A673 (cell line): ENCODE measurements at regions of chr1 and their contacts with region 1.

Region 1: DNA sequence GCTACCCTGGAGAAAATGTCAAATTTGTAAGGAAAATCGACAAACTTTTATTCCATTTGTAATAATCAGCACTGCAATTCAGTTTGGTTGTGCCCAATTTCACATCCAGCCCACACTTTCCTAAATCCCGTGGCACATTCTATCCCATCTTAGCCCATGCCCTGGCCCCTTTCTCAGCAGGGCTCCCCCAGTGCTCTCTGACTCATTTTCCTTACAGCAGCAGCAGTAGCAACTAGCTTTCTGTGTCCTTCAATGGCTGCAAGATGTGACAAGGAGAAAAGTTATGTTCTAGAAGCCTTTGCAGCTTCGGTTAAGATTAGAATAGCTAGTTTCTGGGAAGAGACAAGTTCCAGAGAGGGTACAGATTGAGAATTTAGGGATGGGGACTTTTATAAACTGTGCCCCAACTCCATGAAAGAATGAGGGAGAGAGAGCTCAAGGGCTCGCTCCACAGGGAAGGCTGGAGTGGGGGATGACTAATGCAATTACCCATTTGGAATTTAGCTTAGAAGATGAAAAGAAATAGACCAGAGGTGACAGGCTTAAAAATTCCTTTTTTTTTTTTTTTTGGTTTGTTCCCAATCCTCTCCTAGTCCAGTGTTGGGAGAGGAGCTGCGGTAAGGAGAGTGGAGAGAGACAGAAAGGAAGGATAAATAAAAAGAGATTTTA is 47.0 kb upstream of the POU2F1 start:
- DNase-seq: peak; percentile 87
- H3K4me3 ChIP-seq: no peak overlapping the region
- H3K27ac ChIP-seq: peak overlapping the region; percentile 22
- H3K4me1 ChIP-seq: peaks cover 44% of the 10 kb centered on the region
- H3K27me3 ChIP-seq: no peaks in the 10 kb centered on the region
- CTCF ChIP-seq: no peak

Region 2: DNA sequence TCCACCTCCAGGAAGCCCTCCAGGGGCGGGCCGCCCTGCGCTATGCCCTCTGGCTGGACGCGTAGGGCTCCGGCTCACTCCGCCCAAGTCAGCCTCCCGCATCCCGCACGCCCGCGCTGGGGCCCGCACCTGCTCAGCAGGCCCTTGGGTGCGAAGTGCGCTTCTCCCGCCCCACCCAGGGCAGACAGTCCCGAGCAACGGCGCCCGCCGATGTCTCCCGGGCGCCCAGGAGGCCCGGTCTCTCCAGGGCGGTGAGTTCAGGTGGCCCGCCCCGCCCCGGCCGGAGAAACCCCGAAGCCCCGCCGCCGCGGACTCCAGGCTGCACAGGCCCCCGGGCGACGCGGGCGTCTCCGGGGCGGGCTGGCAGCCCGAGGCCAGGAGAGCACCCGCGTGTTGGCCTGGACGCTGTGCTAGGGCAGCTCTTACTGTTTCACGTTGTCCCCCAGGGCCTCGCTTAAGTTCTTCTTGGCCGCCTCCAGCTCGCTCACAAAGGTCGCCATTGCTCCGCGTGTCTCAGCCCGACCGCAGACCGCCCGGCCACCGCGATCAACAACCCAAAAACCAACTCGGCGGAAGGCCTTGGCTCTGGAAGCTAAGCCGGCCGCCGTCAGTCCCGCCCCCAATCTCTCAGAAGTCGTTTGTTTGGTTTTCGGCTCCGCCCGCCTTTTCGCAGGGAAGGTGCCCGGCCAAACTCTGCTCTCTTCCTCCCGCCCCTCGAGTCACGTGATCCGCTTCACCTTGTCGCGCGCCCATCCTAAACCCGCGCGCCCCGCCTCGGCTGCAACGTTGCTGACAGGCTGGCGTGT is 297.7 kb before region 1 on chr1 and contains the start of gene TADA1:
- CTCF ChIA-PET with region 1: no interaction called
- POLR2A ChIA-PET with region 1: no interaction called
- intact Hi-C with region 1: no loop called
- DNase-seq: peak; percentile 100
- H3K4me3 ChIP-seq: peak within 1 kb of the TSS; percentile 72
- H3K27ac ChIP-seq: peak within 1 kb of the TSS; percentile 88
- H3K4me1 ChIP-seq: peaks cover 10% of the 10 kb centered on the region
- H3K27me3 ChIP-seq: no peaks in the 10 kb centered on the region
- CTCF ChIP-seq: no peak
- total RNA-seq, gene TADA1: 15.2 and 17.8 TPM in 2 replicates

Region 3: DNA sequence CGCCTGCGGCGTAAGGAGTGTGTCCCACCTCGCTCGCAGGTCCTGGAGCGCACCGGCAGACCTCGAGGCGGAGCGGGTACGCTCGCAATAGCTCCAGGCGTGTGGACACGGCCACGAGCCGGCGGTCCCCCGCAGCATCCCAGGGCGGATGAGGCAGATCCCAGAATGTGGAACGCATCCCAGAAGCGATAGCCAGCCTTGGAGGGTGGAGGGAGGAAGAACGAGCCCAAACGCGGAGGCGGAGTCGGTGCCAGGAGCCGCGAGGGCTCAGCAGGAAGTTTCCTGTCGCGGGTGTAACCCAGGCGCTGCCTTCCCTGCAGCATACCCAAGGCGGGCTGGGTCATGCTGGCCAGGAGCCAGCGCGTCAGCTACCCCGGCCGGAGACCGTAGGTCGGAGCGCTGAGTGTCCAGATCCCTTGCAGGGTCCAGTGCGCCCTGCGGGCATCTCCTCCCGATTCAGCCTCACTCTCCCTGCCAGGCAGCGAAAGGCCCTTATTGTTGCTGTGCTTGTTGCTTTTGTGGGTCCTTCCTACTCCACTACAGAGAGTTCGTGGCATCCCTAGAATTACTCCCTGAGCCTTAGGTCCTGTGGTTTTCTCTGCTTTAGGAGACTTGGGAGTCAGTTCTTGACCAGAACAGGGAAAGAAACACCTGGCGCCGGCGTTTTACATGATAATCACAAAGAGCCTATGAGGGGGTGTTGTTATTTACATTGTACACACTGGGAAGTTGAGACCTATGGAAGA is 52.1 kb before region 1 on chr1:
- CTCF ChIA-PET with region 1: no interaction called
- POLR2A ChIA-PET with region 1: no interaction called
- intact Hi-C with region 1: no loop called
- DNase-seq: peak; percentile 92
- H3K4me3 ChIP-seq: peak overlapping the region; percentile 49
- H3K27ac ChIP-seq: peak overlapping the region; percentile 0
- H3K4me1 ChIP-seq: peaks cover 23% of the 10 kb centered on the region
- H3K27me3 ChIP-seq: no peaks in the 10 kb centered on the region
- CTCF ChIP-seq: no peak

Region 4: GRCh38 chr1:167185974-167186657 is 12.5 kb after region 1 on chr1:
- CTCF ChIA-PET with region 1: no interaction called
- POLR2A ChIA-PET with region 1: no interaction called
- intact Hi-C with region 1: loop called (anchors 1 kb)
- DNase-seq: peak; percentile 30
- H3K4me3 ChIP-seq: no peak overlapping the region
- H3K27ac ChIP-seq: no peak overlapping the region
- H3K4me1 ChIP-seq: peaks cover 5% of the 10 kb centered on the region
- H3K27me3 ChIP-seq: no peaks in the 10 kb centered on the region
- CTCF ChIP-seq: no peak

Region 5: DNA sequence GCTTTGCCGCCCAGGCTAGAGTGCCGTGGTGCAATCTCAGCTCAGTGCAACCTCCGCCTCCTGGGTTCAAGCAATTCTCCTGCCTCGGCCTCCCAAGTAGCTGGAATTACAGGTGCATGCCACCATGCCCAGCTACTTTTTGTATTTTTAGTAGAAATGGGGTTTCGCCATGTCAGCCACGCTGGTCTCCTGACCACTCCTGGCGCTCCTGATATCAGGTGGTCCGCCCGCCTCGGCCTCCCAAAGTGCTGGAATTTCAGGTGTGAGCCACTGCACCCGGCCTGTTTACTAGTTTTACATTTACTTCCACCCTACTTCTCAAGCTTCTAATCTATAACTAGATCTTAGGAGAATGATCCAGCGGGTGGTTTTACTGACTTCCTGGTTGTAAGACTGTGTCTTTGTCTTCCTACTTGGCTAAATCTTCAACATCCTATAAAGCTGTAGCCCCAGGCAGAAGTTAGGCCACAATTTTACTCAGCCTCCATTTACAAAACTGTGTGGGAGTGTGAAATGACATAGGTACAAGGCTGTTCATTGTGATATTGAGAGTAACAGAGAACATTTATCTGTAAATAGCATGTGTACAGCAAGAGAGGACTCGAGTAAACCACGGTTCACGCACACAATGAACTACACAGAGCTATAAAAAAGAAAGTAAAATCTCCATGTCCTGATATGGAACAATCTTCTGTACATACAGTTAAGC is 37.5 kb after region 1 on chr1:
- CTCF ChIA-PET with region 1: no interaction called
- POLR2A ChIA-PET with region 1: no interaction called
- intact Hi-C with region 1: no loop called
- DNase-seq: no peak
- H3K4me3 ChIP-seq: no peak overlapping the region
- H3K27ac ChIP-seq: no peak overlapping the region
- H3K4me1 ChIP-seq: peaks cover 16% of the 10 kb centered on the region
- H3K27me3 ChIP-seq: no peaks in the 10 kb centered on the region
- CTCF ChIP-seq: no peak

Region 6: GRCh38 chr1:167412072-167412471 is 238.4 kb after region 1 on chr1:
- CTCF ChIA-PET with region 1: no interaction called
- POLR2A ChIA-PET with region 1: no interaction called
- intact Hi-C with region 1: no loop called
- DNase-seq: no peak
- H3K4me3 ChIP-seq: no peak overlapping the region
- H3K27ac ChIP-seq: no peak overlapping the region
- H3K4me1 ChIP-seq: no peaks in the 10 kb centered on the region
- H3K27me3 ChIP-seq: no peaks in the 10 kb centered on the region
- CTCF ChIP-seq: no peak